ENCODE measurements at regions of chr20 and their contacts with region 1.

Region 1: DNA sequence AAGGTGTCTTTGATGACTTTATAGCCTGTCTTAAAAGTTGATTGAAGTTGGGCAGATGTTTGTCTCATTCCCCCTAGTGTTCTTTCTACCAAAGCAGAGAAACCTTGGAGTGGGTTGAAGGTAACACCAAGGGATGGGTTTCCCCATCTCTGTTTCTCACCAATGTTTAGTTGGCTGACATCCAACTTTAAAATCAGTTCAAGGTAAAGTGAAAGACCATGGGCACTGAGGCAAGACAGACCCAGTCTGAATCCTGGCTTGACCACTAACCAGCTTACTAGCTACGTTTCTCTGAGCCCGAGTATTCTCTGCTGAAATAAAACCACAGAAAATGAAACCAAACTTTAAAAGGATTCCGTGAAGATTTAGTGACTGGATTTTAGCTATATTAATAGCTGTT is 258.9 kb downstream of the KIF16B start:
- DNase-seq: no peak
- H3K4me3 Mint-ChIP-seq: no peak overlapping the region
- H3K27ac Mint-ChIP-seq: no peak overlapping the region
- H3K4me1 Mint-ChIP-seq: no peaks in the 10 kb centered on the region
- H3K27me3 Mint-ChIP-seq: no peaks in the 10 kb centered on the region

Region 2: DNA sequence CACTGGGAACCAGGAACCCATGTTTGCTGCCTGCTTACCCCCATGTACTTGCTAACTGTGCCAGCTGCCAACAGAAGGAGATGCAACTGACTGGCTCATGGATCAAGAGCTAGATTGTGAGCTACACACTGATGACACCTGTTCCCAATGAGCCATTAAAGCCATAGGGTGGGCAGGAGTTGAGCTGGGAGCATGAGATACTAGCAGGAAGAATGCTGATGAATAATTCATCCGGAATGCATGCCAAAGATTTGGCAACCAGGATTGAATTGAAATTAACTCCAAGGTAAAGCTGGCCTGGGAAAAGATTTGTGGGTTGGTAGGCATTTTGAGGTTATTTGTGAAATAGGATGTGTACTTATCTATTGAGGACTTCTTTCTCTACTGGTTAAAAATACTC is 372.2 kb before region 1 on chr20:
- CTCF ChIA-PET with region 1: no interaction called
- intact Hi-C with region 1: no loop called
- DNase-seq: no peak
- H3K4me3 Mint-ChIP-seq: no peak overlapping the region
- H3K27ac Mint-ChIP-seq: no peak overlapping the region
- H3K4me1 Mint-ChIP-seq: no peaks in the 10 kb centered on the region
- H3K27me3 Mint-ChIP-seq: peaks cover 4% of the 10 kb centered on the region

Region 3: GRCh38 chr20:15965165-15965564 is 349.2 kb before region 1 on chr20:
- CTCF ChIA-PET with region 1: no interaction called
- intact Hi-C with region 1: no loop called
- DNase-seq: no peak
- H3K4me3 Mint-ChIP-seq: no peak overlapping the region
- H3K27ac Mint-ChIP-seq: no peak overlapping the region
- H3K4me1 Mint-ChIP-seq: no peaks in the 10 kb centered on the region
- H3K27me3 Mint-ChIP-seq: no peaks in the 10 kb centered on the region

Region 4: GRCh38 chr20:16273812-16274555 is 40.3 kb before region 1 on chr20:
- CTCF ChIA-PET with region 1: no interaction called
- intact Hi-C with region 1: no loop called
- DNase-seq: no peak
- H3K4me3 Mint-ChIP-seq: no peak overlapping the region
- H3K27ac Mint-ChIP-seq: no peak overlapping the region
- H3K4me1 Mint-ChIP-seq: no peaks in the 10 kb centered on the region
- H3K27me3 Mint-ChIP-seq: no peaks in the 10 kb centered on the region

Region 5: GRCh38 chr20:16299892-16300291 is 14.4 kb before region 1 on chr20:
- CTCF ChIA-PET with region 1: no interaction called
- intact Hi-C with region 1: no loop called
- DNase-seq: no peak
- H3K4me3 Mint-ChIP-seq: no peak overlapping the region
- H3K27ac Mint-ChIP-seq: no peak overlapping the region
- H3K4me1 Mint-ChIP-seq: no peaks in the 10 kb centered on the region
- H3K27me3 Mint-ChIP-seq: no peaks in the 10 kb centered on the region

Region 6: GRCh38 chr20:16378709-16379370 is 64.5 kb after region 1 on chr20:
- CTCF ChIA-PET with region 1: no interaction called
- intact Hi-C with region 1: loop called (anchors 10 kb)
- DNase-seq: no peak
- H3K4me3 Mint-ChIP-seq: no peak overlapping the region
- H3K27ac Mint-ChIP-seq: no peak overlapping the region
- H3K4me1 Mint-ChIP-seq: no peaks in the 10 kb centered on the region
- H3K27me3 Mint-ChIP-seq: no peaks in the 10 kb centered on the region